Colonic mucosa (tissue), 4 donors: ENCODE measurements at regions of chr12 and their contacts with region 1.

Region 1: GRCh38 chr12:29317556-29318363 is 63.2 kb downstream of the ERGIC2 start:
- DNase-seq: peak; percentile 34
- H3K4me3 ChIP-seq: no peak overlapping the region
- H3K27ac ChIP-seq: no peak overlapping the region
- H3K4me1 ChIP-seq: no peaks in the 10 kb centered on the region
- H3K27me3 ChIP-seq: no peaks in the 10 kb centered on the region
- CTCF ChIP-seq: peak; percentile 78

Region 2: DNA sequence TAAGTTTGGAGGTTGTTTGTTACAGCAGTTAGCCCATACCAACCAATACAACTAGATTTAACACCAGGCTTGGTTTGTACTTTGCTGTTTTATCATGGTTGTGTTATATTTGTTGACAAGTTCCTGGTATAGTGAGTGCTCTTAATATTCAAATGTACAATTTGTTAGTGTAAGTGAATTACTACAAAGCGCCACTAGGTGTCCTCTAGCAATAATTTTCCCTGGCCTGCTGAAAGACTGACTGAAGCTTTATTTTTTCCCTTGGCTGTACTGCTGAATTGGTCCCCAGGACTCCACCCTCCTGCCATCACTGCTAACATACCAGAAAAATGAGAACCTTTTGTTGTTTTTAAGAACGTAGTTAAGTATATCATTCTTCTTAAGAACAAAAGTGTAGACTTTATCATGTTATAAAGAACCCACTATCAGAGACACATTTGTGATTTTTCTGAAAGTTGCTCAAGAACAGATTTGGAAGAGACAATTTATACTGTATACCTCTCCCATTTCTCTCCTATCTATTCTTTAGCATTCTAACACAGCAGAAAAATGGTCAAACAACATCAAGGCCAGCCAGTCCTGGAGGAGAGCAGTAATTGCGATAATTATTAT is 244.0 kb before region 1 on chr12:
- intact Hi-C with region 1: loop called (anchors 5 kb)
- DNase-seq: peak; percentile 29
- H3K4me3 ChIP-seq: no peak overlapping the region
- H3K27ac ChIP-seq: no peak overlapping the region
- H3K4me1 ChIP-seq: no peaks in the 10 kb centered on the region
- H3K27me3 ChIP-seq: no peaks in the 10 kb centered on the region
- CTCF ChIP-seq: peak; percentile 66

Region 3: GRCh38 chr12:29088611-29089219 is 229.0 kb before region 1 on chr12:
- intact Hi-C with region 1: loop called (anchors 5 kb)
- DNase-seq: no peak
- H3K4me3 ChIP-seq: no peak overlapping the region
- H3K27ac ChIP-seq: no peak overlapping the region
- H3K4me1 ChIP-seq: no peaks in the 10 kb centered on the region
- H3K27me3 ChIP-seq: no peaks in the 10 kb centered on the region
- CTCF ChIP-seq: peak; percentile 30